PC-9 (cell line): ENCODE measurements at regions of chr1 and their contacts with region 1.

Region 1: DNA sequence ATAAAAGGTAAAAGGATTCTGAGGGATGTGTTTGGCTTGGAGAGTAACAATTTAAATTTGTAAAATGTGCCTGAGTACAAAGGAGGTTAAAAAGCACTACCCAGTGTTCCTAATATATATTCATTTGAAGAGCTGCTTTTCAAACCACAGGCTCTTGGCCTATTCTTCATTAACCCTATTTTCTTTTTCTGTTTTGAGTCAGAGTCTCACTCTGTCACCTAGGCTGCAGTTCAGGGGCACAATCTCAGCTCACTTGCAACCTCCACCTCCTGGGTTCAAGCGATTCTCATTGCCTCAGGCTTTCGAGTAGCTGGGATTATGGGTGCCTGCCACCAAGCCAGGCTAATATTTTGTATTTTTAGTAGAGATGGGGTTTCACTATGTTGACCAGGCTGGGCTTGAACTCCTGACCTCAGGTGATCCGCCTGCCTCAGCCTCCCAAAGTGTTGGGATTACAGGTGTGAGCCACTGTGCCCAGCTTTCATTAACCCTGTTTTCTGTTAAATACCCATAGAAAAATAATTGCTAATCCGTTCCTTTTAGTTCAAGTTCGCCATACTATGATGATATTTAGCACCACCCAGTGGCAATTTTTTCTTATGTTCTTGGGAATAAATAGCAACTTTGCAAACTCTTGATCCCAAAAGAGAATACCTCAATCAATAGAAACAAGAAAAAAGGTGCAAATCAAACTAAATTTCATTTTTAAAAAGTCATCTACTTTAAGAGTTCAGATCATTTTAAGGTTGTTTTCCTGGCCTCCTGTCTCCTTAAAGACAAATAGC is 30.5 kb downstream of the ZBTB8OS start:
- DNase-seq: no peak
- H3K4me3 ChIP-seq: no peak overlapping the region
- H3K27ac ChIP-seq: no peak overlapping the region
- H3K4me1 ChIP-seq: no peaks in the 10 kb centered on the region
- H3K27me3 ChIP-seq: no peaks in the 10 kb centered on the region
- CTCF ChIP-seq: peak; percentile 23; the same call in 1 of the 2 replicates

Region 2: GRCh38 chr1:32406629-32407111 is 213.2 kb before region 1 on chr1:
- CTCF ChIA-PET with region 1: no interaction called
- POLR2A ChIA-PET with region 1: interaction called, 12 read pairs
- intact Hi-C with region 1: no loop called
- DNase-seq: peak; percentile 40 to 91
- H3K4me3 ChIP-seq: no peak overlapping the region
- H3K27ac ChIP-seq: peak overlapping the region; percentile 38
- H3K4me1 ChIP-seq: peaks cover 23% of the 10 kb centered on the region
- H3K27me3 ChIP-seq: no peaks in the 10 kb centered on the region
- CTCF ChIP-seq: no peak

Region 3: GRCh38 chr1:32549616-32550015 is 70.3 kb before region 1 on chr1:
- CTCF ChIA-PET with region 1: no interaction called
- POLR2A ChIA-PET with region 1: no interaction called
- intact Hi-C with region 1: no loop called
- DNase-seq: no peak
- H3K4me3 ChIP-seq: no peak overlapping the region
- H3K27ac ChIP-seq: no peak overlapping the region
- H3K4me1 ChIP-seq: no peaks in the 10 kb centered on the region
- H3K27me3 ChIP-seq: no peaks in the 10 kb centered on the region
- CTCF ChIP-seq: no peak

Region 4: GRCh38 chr1:32636914-32637645 is 17.2 kb after region 1 on chr1:
- CTCF ChIA-PET with region 1: no interaction called
- POLR2A ChIA-PET with region 1: no interaction called
- intact Hi-C with region 1: no loop called
- DNase-seq: peak; percentile 5 to 72
- H3K4me3 ChIP-seq: no peak overlapping the region
- H3K27ac ChIP-seq: peak overlapping the region; percentile 78
- H3K4me1 ChIP-seq: peaks cover 22% of the 10 kb centered on the region
- H3K27me3 ChIP-seq: no peaks in the 10 kb centered on the region
- CTCF ChIP-seq: no peak

Region 5: DNA sequence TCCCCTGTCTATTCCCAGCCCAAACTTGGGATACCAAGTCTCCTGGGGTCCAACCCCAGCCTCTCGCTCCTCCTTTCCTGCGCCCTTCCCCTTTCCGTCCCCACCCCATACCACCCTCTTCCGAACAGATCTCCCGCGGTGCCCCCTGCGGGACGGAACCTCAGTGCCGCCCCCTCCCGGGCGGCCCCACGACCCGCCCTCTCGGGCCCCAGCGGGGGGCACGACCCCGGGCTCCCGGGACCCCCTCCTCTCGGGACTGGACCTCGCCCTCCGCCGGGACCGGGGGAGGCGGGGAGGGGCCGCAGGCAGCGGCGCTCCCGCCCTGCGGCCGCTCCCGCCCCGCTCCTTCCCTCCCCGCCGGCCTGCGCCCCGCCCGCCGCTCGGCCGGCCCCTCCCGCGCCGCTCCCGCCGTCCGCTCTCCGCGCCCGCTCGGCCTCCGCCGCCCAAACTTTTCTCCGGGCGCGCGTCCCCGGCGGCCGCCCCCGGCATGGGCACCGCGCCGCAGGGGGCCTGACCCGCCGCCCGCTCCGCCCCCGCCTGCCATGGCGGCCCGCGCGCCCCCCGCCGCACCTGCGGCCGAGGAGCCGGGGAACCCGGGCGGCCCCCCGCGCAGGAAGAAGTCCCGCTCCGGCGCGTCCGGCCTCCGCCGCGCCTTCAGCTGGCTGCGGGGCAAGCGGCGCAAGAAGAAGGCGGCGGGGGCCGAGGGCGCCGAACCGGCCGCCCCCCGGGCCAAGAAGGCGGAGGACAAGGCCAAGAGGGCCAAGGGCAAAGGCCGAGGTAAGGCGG is 121.7 kb after region 1 on chr1:
- CTCF ChIA-PET with region 1: no interaction called
- POLR2A ChIA-PET with region 1: interaction called, 11 read pairs
- intact Hi-C with region 1: no loop called
- DNase-seq: no peak
- H3K4me3 ChIP-seq: peak overlapping the region; percentile 70
- H3K27ac ChIP-seq: peak overlapping the region; percentile 84
- H3K4me1 ChIP-seq: peaks cover 45% of the 10 kb centered on the region
- H3K27me3 ChIP-seq: no peaks in the 10 kb centered on the region
- CTCF ChIP-seq: no peak; the same call in 1 of the 2 replicates